ENCODE measurements at regions of chr10 and their contacts with region 1.

Region 1: DNA sequence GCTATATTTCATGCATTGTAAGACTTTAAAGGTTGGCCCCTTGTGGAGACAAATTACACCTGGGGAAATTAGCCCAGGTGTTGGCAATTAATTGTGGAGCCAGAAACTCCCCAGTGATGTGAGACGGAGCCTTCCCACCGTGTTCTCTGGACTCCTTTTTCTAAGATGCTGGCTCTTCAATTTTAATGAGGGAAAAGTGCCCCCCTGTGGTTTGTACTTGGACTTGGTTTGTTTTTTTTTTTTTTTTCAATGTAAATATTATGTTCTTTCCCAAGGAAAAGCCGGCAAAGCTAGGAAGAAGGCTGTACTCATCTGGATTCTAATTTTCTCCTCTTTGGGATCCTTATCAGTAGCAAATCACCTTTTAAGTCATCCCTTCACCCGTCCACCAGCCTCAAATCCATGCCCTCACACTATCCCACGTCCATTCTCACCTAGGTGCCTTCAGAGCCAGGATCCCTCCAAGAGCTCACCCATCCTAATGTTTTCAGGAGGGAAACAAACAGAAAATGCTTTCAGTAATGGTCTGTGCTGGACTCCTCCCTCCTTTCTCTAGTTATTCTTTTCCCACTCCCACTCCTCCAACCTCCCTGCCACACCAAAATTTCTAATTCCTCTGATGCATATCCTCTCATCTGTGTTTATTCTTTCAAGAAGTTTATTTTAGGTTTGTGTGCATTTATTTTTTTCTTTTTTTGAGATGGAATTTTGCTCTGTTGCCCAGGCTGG is 20.4 kb upstream of the ST8SIA6 start:
- DNase-seq: peak in 1 of 2 experiments; percentile 18
- H3K4me3 ChIP-seq: no peak overlapping the region
- H3K4me3 Mint-ChIP-seq: no peak overlapping the region
- H3K27ac Mint-ChIP-seq: no peak overlapping the region
- H3K4me1 ChIP-seq: no peaks in the 10 kb centered on the region
- H3K4me1 Mint-ChIP-seq: no peaks in the 10 kb centered on the region
- H3K27me3 ChIP-seq: no peaks in the 10 kb centered on the region
- H3K27me3 Mint-ChIP-seq: peaks cover 13% of the 10 kb centered on the region
- CTCF ChIP-seq: peak in 1 of 2 experiments; percentile 29

Region 2: GRCh38 chr10:16867556-16867955 is 607.2 kb before region 1 on chr10:
- CTCF ChIA-PET with region 1: interaction called, 10 read pairs
- POLR2A ChIA-PET with region 1: no interaction called
- intact Hi-C with region 1: no loop called
- DNase-seq: no peak
- H3K4me3 ChIP-seq: no peak overlapping the region
- H3K4me3 Mint-ChIP-seq: no peak overlapping the region
- H3K27ac Mint-ChIP-seq: no peak overlapping the region
- H3K4me1 ChIP-seq: no peaks in the 10 kb centered on the region
- H3K4me1 Mint-ChIP-seq: no peaks in the 10 kb centered on the region
- H3K27me3 ChIP-seq: no peaks in the 10 kb centered on the region
- H3K27me3 Mint-ChIP-seq: peaks cover 16% of the 10 kb centered on the region
- CTCF ChIP-seq: no peak

Region 3: DNA sequence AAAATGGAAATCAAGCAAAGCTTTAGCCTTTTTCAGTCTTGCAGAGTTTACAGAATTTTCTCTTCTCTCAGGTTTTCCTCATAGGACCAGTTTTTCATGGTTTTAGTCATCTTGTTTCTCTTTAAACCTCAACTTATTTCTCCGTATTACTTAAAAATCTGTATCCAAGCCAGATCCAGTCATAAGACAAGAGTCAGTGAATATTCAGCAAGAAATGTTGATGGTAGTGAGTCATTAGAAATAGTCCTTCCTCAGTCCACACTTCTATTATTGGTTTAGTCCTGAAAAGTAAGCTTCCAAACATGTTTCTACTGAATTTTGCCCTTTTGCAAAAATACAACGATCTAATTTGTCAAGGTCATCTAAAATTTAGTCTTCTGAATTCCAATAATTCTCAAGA is 139.7 kb before region 1 on chr10:
- CTCF ChIA-PET with region 1: no interaction called
- POLR2A ChIA-PET with region 1: no interaction called
- intact Hi-C with region 1: no loop called
- DNase-seq: no peak
- H3K4me3 ChIP-seq: no peak overlapping the region
- H3K4me3 Mint-ChIP-seq: no peak overlapping the region
- H3K27ac Mint-ChIP-seq: no peak overlapping the region
- H3K4me1 ChIP-seq: no peaks in the 10 kb centered on the region
- H3K4me1 Mint-ChIP-seq: no peaks in the 10 kb centered on the region
- H3K27me3 ChIP-seq: no peaks in the 10 kb centered on the region
- H3K27me3 Mint-ChIP-seq: no peaks in the 10 kb centered on the region
- CTCF ChIP-seq: no peak

Region 4: GRCh38 chr10:17375936-17376584 is 98.7 kb before region 1 on chr10:
- CTCF ChIA-PET with region 1: interaction called, 11 read pairs
- POLR2A ChIA-PET with region 1: no interaction called
- intact Hi-C with region 1: no loop called
- DNase-seq: peak in 1 of 2 experiments; percentile 35
- H3K4me3 ChIP-seq: no peak overlapping the region
- H3K4me3 Mint-ChIP-seq: no peak overlapping the region
- H3K27ac Mint-ChIP-seq: no peak overlapping the region
- H3K4me1 ChIP-seq: peaks cover 14% of the 10 kb centered on the region
- H3K4me1 Mint-ChIP-seq: peaks cover 21% of the 10 kb centered on the region
- H3K27me3 ChIP-seq: no peaks in the 10 kb centered on the region
- H3K27me3 Mint-ChIP-seq: no peaks in the 10 kb centered on the region
- CTCF ChIP-seq: peak; percentile 1 to 68

Measured in Caco-2 (cell line).